Activated CD4-positive, alpha-beta T cell treated with anti-CD3 and anti-CD28 coated beads for 36 hours (primary cell): ENCODE measurements at regions of chr4 and their contacts with region 1.

Region 1: GRCh38 chr4:113781439-113782040 is 20.0 kb upstream of the CAMK2D start:
- DNase-seq: no peak
- ATAC-seq: no peak
- H3K4me3 Mint-ChIP-seq: no peak overlapping the region
- H3K27ac Mint-ChIP-seq: no peak overlapping the region
- H3K4me1 Mint-ChIP-seq: peaks cover 31% of the 10 kb centered on the region
- H3K27me3 Mint-ChIP-seq: no peaks in the 10 kb centered on the region

Region 2: GRCh38 chr4:113901994-113902787 is 120.7 kb after region 1 on chr4:
- CTCF ChIA-PET with region 1: no interaction called
- POLR2A ChIA-PET with region 1: no interaction called
- intact Hi-C with region 1: loop called in 1 of 2 experiments (anchors 10 kb)
- DNase-seq: peak; percentile 78
- ATAC-seq: peak; percentile 96
- H3K4me3 Mint-ChIP-seq: peak overlapping the region; percentile 20
- H3K27ac Mint-ChIP-seq: peak overlapping the region; percentile 81
- H3K4me1 Mint-ChIP-seq: peaks cover 64% of the 10 kb centered on the region
- H3K27me3 Mint-ChIP-seq: no peaks in the 10 kb centered on the region

Region 3: GRCh38 chr4:114077610-114078009 is 296.1 kb after region 1 on chr4:
- CTCF ChIA-PET with region 1: no interaction called
- POLR2A ChIA-PET with region 1: no interaction called
- intact Hi-C with region 1: loop called in 1 of 2 experiments (anchors 5 kb)
- DNase-seq: no peak
- ATAC-seq: no peak
- H3K4me3 Mint-ChIP-seq: no peak overlapping the region
- H3K27ac Mint-ChIP-seq: no peak overlapping the region
- H3K4me1 Mint-ChIP-seq: no peaks in the 10 kb centered on the region
- H3K27me3 Mint-ChIP-seq: peaks cover 6% of the 10 kb centered on the region

Region 4: DNA sequence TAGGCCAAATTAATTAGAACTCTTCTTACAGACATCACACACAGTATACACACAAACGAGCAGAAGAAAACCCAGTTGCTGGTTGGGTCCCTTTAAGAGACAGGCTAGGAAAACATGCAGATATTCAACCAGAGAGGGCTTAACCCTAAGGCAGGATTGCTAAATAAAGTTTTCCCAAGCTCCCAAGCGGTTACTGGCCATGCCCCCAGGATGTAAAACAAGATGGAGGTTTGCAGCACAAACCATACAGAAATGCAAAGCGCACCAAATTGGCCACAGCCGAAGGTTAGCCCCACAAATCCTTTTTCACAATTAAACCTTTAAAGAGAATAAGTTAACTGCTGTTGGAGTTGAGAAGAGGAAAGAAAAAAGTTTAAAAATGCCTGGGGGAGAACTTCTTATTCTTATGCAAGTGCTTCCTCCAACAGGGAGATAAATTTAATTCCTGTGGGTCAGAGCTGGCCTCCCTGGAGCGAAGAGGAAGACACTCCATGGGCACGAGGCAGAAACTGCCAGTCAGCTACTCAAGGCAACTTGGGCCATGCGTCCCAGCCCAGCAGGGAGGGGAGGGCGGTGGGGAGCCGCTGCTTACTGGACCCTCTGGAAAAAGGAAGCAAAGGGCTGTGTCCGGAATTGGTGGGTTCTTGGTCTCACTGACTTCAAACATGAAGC is 365.5 kb after region 1 on chr4:
- CTCF ChIA-PET with region 1: no interaction called
- POLR2A ChIA-PET with region 1: no interaction called
- intact Hi-C with region 1: no loop called
- DNase-seq: no peak
- ATAC-seq: no peak
- H3K4me3 Mint-ChIP-seq: peak overlapping the region; percentile 64
- H3K27ac Mint-ChIP-seq: no peak overlapping the region
- H3K4me1 Mint-ChIP-seq: peaks cover 8% of the 10 kb centered on the region
- H3K27me3 Mint-ChIP-seq: peaks cover 10% of the 10 kb centered on the region